ENCODE measurements at regions of chr5 and their contacts with region 1.

Region 1: DNA sequence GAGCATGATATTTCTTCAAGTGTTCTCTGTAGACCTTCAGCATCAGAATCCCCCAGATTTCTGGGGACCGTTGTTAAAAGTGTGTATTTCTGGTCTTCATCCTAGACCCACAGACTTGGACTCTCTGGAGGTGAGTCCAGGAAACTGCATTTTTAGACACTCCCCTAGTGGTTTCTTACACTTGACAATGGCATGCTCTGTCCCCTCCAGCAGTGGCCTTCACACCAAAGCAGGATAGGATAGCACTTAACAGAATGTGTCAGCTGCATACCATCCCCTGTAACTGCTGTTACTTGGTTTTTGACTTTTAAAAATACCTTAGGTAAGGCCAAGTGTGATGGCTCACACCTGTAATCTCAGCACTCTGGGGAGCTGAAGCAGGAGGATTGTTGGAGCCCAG is 20.8 kb downstream of the CDO1 start:
- DNase-seq: no peak
- H3K4me3 ChIP-seq: no peak overlapping the region
- H3K27ac ChIP-seq: no peak overlapping the region
- H3K4me1 ChIP-seq: no peaks in the 10 kb centered on the region
- H3K27me3 ChIP-seq: no peaks in the 10 kb centered on the region
- CTCF ChIP-seq: no peak
- POLR2A ChIP-seq: no peak

Region 2: DNA sequence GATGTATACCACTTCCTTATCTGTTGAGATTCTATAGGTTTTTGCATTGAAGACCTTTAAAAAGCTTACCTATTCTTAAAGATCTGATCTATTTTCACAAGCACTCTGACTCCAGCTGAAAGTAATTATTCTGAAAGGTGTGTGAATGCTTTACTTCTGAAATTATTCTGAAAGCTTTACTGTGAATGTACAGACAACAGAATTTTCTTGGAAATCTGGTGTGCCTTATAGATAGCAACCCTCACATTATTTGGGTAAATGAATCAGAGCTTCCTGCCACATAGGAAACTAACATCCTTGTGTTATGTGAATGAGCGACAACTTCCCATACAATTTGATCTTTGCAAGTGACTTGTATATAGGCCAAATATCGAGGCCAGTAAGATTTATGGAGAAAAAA is 14.2 kb after region 1 on chr5:
- intact Hi-C with region 1: loop called (anchors 1 kb)
- DNase-seq: no peak
- H3K4me3 ChIP-seq: no peak overlapping the region
- H3K27ac ChIP-seq: no peak overlapping the region
- H3K4me1 ChIP-seq: no peaks in the 10 kb centered on the region
- H3K27me3 ChIP-seq: peaks cover 0 to 13% of the 10 kb centered on the region in 2 donors
- CTCF ChIP-seq: no peak
- POLR2A ChIP-seq: no peak